ENCODE measurements at regions of chr12 and their contacts with region 1.

Region 1: DNA sequence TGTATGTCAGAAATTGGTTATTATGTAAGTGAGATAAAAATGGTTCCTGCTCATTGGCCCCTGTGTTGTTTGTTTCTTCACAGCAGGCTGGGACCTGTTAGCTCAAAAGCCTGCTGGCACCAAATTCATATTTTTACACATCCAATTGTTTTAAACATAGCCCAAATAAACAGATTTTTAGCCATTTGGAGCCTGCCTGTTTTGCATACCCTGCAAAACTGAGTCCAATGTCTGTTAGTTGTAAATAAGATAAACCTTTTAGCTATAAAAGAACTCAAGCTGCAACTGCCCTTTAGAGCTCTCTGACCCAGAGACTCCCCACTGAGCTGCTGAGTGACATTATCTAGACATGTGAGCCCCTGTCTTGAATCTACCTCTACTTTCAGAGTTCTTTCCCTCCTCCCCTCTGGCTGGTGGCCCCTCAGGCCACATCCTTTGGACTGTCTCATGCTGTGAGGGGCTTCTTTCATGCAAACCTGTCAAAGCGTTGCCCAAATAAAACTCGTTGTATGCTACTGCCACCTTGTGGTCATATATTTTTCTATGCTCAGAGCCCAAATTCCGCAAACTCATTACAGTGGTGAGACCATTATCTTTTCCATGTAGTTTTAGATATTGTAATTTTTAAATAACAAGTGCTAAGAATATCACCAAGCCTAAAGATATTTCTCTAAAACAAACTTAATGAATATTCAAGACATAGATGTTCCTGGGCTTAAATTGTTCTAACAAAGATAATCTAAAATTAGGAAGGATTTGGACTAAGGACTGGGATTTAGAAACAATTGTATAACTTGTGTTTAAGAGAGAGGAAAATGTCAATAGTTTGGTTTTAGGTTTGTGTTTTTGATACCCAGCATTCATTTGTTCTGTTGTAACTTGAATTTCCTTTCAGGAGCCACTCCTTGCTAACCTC is 337.9 kb downstream of the AACS start:
- DNase-seq: no peak
- H3K4me3 Mint-ChIP-seq: no peak overlapping the region
- H3K27ac Mint-ChIP-seq: no peak overlapping the region
- H3K4me1 Mint-ChIP-seq: peaks cover 8% of the 10 kb centered on the region
- H3K27me3 Mint-ChIP-seq: peaks cover 2% of the 10 kb centered on the region

Region 2: GRCh38 chr12:125183187-125184067 is 219.7 kb before region 1 on chr12:
- intact Hi-C with region 1: loop called (anchors 1 kb)
- DNase-seq: peak; percentile 72
- H3K4me3 Mint-ChIP-seq: no peak overlapping the region
- H3K27ac Mint-ChIP-seq: no peak overlapping the region
- H3K4me1 Mint-ChIP-seq: peaks cover 3% of the 10 kb centered on the region
- H3K27me3 Mint-ChIP-seq: peaks cover 48% of the 10 kb centered on the region

Region 3: GRCh38 chr12:125330645-125331341 is 72.3 kb before region 1 on chr12:
- intact Hi-C with region 1: loop called (anchors 1 kb)
- DNase-seq: peak; percentile 36
- H3K4me3 Mint-ChIP-seq: no peak overlapping the region
- H3K27ac Mint-ChIP-seq: no peak overlapping the region
- H3K4me1 Mint-ChIP-seq: no peaks in the 10 kb centered on the region
- H3K27me3 Mint-ChIP-seq: peaks cover 8% of the 10 kb centered on the region

Region 4: DNA sequence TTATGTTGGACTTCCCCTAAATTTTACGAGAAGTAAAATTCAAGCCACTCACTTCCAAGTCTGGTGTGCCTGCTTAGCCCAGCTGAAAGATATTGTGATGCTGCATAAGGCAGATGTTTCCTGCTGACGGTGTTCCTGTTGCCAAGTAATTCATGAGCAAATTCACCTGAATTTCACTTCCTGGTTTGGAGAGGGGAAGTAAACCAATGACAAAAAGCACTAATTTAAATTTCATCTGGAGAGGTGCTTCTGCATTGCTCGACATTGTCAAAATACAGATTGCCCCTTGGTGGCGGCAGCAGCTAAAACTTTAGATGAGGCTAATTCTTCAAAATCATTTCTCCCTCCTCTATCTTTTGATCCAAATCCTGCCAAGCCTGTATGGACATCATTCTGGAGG is 56.8 kb before region 1 on chr12:
- intact Hi-C with region 1: loop called (anchors 2 kb)
- DNase-seq: no peak
- H3K4me3 Mint-ChIP-seq: no peak overlapping the region
- H3K27ac Mint-ChIP-seq: no peak overlapping the region
- H3K4me1 Mint-ChIP-seq: peaks cover 8% of the 10 kb centered on the region
- H3K27me3 Mint-ChIP-seq: peaks cover 15% of the 10 kb centered on the region

Region 5: GRCh38 chr12:125387206-125387605 is 15.9 kb before region 1 on chr12:
- intact Hi-C with region 1: no loop called
- DNase-seq: no peak
- H3K4me3 Mint-ChIP-seq: no peak overlapping the region
- H3K27ac Mint-ChIP-seq: no peak overlapping the region
- H3K4me1 Mint-ChIP-seq: no peaks in the 10 kb centered on the region
- H3K27me3 Mint-ChIP-seq: no peaks in the 10 kb centered on the region